Activated CD4-positive, alpha-beta T cell treated with anti-CD3 and anti-CD28 coated beads for 36 hours (primary cell): ENCODE measurements at regions of chr17 and their contacts with region 1.

Region 1: DNA sequence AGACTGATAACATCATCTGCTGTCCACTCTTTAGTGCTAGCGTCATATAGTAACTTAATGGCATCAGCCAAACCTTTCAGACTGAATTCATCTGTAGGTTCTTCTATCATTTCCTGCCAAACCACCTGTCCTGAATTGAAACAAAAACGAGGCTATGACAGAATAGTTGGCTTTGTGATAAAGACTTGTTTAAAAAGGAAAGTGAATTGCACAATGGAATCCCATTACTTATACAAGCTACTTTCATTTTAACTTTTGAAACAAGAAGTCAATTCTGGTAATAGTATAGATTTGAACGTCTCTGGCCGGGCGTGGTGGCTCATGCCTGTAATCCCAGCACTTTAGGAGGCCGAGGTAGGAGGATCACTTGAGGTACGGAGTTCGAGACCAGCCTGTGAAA is 18.2 kb downstream of the LASP1NB start:
- DNase-seq: peak; percentile 56
- ATAC-seq: peak; percentile 82
- H3K4me3 Mint-ChIP-seq: no peak overlapping the region
- H3K27ac Mint-ChIP-seq: peak overlapping the region; percentile 70
- H3K4me1 Mint-ChIP-seq: peaks cover 11% of the 10 kb centered on the region
- H3K27me3 Mint-ChIP-seq: no peaks in the 10 kb centered on the region

Region 2: GRCh38 chr17:38967290-38967738 is 23.7 kb after region 1 on chr17 and contains the start of gene FBXO47:
- CTCF ChIA-PET with region 1: no interaction called
- POLR2A ChIA-PET with region 1: no interaction called
- intact Hi-C with region 1: loop called in 1 of 2 experiments (anchors 2 kb)
- DNase-seq: peak; percentile 91
- ATAC-seq: peak; percentile 98
- H3K4me3 Mint-ChIP-seq: peak within 1 kb of the TSS; percentile 64
- H3K27ac Mint-ChIP-seq: peak within 1 kb of the TSS; percentile 87
- H3K4me1 Mint-ChIP-seq: peaks cover 16% of the 10 kb centered on the region
- H3K27me3 Mint-ChIP-seq: no peaks in the 10 kb centered on the region
- total RNA-seq, gene FBXO47: 0.11 to 0.16 TPM